ENCODE measurements at regions of chr5 and their contacts with region 1.

Region 1: GRCh38 chr5:132802044-132802684 is 10.9 kb upstream of the SOWAHA start:
- DNase-seq: peak; percentile 44
- H3K4me3 Mint-ChIP-seq: no peak overlapping the region
- H3K27ac Mint-ChIP-seq: no peak overlapping the region
- H3K4me1 Mint-ChIP-seq: no peaks in the 10 kb centered on the region
- H3K27me3 Mint-ChIP-seq: peaks cover 37% of the 10 kb centered on the region

Region 2: DNA sequence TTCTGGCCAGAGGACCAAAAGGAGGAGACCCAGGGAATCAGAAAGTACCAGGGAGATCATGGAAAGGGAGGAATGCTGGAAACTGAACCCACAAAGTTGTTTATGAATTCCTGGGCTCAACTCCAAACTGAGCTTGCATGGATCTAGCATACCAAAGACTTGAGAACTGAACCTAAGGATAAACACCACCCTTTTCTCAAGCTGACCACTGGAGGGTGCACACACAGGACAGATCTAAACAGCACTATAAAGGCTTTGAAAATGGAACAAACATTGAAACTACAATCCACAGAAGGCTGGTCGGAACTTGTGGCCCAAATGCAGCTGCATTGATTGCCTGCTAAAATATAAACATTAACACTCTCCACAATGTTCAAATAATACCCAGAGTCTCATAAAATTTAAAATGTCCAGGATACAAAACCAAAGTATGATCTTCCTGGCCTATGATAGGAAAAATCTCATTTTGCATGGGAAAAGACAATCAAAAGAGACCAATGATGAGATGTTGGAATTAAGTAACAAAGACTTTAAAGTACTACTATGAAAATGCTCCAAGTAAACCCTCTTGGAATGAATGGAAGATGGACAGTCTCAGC is 296.0 kb before region 1 on chr5:
- CTCF ChIA-PET with region 1: interaction called, 3 read pairs
- intact Hi-C with region 1: loop called (anchors 5 kb)
- DNase-seq: peak; percentile 32
- H3K4me3 Mint-ChIP-seq: no peak overlapping the region
- H3K27ac Mint-ChIP-seq: no peak overlapping the region
- H3K4me1 Mint-ChIP-seq: no peaks in the 10 kb centered on the region
- H3K27me3 Mint-ChIP-seq: peaks cover 11% of the 10 kb centered on the region

Region 3: GRCh38 chr5:132591145-132591544 is 211.0 kb before region 1 on chr5:
- CTCF ChIA-PET with region 1: no interaction called
- intact Hi-C with region 1: loop called (anchors 5 kb)
- DNase-seq: no peak
- H3K4me3 Mint-ChIP-seq: no peak overlapping the region
- H3K27ac Mint-ChIP-seq: no peak overlapping the region
- H3K4me1 Mint-ChIP-seq: no peaks in the 10 kb centered on the region
- H3K27me3 Mint-ChIP-seq: no peaks in the 10 kb centered on the region

Region 4: DNA sequence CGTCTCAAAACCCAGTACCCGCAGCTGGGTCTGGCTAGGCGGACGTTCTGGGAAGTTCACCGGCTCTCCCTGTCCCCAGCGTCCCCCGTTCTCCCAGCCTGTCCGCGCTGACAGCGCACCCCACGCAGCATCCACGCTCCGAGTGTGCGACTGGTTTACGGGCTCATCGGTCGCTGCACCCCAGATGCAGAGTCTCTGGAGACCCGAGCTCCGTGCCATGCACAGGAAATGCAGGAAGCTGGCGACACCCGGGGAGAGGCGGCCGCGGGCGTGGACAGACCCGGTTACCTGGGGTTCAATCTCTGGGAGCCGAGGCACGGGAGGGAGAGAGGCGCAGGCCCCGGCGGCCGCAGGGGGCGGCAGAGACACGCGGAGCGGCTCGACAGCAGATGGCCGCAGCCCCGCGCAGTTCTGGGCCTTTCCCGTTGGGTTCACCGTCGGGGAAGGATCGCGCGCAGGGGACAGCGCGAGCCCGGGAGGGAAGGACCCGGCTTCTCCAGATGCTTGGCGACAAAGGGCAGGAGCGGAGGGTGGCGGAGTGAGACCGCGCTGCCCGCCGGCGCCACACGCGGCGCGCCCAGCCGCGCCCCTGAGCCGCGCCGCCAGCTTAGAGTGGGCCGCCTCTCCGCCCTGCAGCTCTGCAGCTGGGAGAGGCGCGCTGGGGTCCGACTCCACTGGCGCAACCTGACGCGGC is 27.7 kb after region 1 on chr5:
- CTCF ChIA-PET with region 1: no interaction called
- intact Hi-C with region 1: no loop called
- DNase-seq: peak; percentile 79
- H3K4me3 Mint-ChIP-seq: peak overlapping the region; percentile 79
- H3K27ac Mint-ChIP-seq: no peak overlapping the region
- H3K4me1 Mint-ChIP-seq: peaks cover 4% of the 10 kb centered on the region
- H3K27me3 Mint-ChIP-seq: peaks cover 50% of the 10 kb centered on the region